Sciatic nerve (tissue), 2 donors: ENCODE measurements at regions of chr1 and their contacts with region 1.

Region 1: DNA sequence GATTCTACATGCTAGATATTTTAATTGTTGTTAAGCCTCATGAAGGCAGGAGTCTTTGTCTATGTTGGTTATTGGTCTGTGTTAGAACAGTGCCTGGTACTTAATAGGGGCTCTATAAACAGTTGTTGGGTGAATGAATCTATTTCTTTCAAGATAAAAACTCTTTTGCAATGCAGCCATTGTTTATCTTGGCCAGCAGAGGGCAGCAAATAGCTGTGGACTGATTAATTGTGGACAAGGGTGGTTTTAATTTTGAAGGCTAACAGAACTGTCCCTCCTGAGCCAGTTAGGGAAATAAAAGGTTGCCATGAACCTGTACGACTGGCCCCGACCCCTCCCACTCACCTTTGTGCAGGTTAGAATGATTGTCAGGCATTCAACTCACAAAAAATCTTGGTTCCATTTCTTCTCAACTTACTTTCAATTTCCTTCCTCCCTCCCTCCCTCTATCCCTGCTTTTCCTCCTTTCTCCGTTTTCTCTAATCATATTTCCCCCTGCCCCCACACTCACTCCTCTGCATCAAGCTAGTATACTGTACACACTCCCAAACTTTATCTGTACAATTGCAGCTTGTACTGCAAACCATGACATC is 66.3 kb upstream of the DIRAS3 start:
- DNase-seq: peak; percentile 74
- ATAC-seq: no peak

Region 2: DNA sequence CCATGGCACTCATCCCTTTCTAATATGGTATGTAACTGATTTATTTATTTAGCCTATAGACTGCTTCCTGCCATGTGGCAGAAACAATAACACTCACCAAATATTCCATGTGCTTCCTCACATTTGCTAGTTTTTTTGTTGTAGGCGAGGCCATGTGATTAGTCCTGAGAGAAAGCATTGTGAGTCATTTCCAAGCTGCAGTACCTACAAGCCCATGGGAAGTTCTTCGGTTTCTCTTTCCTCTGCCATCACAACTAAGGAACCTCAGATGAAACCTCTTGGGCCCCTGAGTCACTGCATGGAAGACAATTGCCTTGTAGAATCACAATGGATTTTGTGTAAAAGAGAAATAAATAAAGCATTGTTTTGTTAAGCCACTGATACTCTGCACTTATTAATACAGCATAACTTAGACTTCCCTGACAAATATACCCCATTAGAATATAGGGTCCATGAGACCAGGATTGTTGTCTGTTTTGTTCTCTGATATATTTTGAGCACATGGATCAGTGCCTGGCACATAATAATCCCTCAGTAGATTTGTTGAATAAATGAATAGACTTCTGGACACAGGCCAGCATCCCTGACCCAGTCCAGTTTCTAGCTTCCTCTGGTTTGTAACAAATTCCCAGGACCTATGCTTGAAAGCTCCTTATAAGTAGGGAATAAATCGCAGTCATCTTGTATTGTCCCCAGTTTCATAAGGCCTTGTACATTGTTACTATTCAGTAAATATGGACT is 490.1 kb before region 1 on chr1:
- intact Hi-C with region 1: no loop called
- DNase-seq: no peak
- ATAC-seq: no peak

Region 3: DNA sequence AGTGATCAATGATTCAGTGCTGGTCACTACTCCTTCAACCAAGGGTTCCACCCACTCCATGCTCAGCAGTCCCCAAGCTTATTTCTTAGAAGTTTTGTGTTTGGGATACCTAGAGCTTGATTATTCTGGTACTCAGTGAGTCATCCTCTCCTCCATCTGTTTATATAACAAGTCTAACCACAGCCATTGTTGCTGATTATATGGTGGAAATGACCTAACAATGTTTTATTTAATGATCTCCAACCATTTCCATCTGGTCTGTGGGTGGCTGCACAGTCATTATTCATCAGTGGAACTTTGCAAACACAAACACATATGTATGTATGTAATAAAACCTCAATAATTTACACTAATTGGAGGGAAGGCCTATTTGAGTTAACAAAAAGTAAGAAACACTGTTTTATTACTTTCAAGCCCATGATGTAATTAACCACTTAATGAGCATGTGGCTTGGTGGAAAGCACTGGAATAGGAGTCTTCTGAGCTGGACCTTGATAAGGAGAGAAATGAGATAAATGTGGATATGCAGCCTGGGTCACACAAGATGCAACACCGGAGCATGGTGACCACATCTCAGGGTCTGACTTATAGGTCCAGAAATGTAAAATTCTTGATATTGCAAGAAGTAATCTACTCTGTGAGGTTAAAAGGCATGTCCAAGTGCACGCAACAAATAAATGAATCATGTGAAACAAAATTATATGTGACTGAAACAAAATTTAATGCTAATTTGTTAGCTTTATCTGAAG is 214.6 kb after region 1 on chr1:
- intact Hi-C with region 1: no loop called
- DNase-seq: no peak
- ATAC-seq: no peak

Region 4: GRCh38 chr1:68344208-68344607 is 227.5 kb after region 1 on chr1:
- intact Hi-C with region 1: loop called (anchors 5 kb)
- DNase-seq: no peak
- ATAC-seq: no peak